ENCODE measurements at regions of chr14 and their contacts with region 1.

Region 1: DNA sequence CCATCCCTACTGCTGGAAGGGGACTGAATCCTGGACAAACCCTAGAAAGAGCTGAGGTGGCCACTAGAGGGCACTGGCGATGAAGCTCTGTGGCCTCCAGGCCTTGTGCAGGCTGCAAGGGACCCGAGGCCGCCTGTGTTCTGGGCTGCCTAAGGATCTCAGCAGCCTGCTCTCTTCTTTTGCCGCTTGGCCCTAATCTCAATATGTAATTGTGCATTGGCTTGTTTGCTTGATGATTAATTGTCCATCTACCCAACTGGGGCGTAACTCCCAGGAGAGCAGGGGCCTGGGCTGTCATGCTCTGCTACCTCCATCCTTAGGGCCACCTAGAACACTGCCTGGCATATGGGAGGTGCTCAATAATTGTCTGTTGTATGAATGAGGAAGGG is 73.8 kb downstream of the SYNE3 start:
- DNase-seq: peak; percentile 86
- ATAC-seq: peak; percentile 96
- H3K4me3 ChIP-seq: no peak overlapping the region
- H3K27ac ChIP-seq: no peak overlapping the region
- H3K4me1 ChIP-seq: no peaks in the 10 kb centered on the region
- H3K27me3 ChIP-seq: no peaks in the 10 kb centered on the region
- CTCF ChIP-seq: peak; percentile 92

Region 2: DNA sequence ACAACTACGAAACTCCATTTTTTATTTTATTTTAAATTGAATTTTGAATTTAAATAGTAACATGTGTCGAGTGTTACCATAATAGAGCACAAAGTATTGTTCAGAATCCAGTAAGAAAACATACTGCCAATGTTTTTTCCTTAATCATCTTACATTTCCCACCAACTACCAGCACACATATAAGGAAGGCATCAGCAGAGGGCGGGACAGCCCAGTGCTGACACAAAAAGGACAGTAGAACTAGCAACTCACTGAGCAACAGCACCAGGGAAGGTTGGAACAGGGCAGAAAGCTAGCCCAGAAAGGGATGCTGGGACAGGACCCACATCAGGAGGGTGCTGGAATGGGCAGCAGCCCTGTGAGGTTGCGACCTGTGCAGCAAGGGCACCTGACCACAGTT is 329.2 kb before region 1 on chr14:
- intact Hi-C with region 1: loop called (anchors 5 kb)
- DNase-seq: no peak
- ATAC-seq: no peak
- H3K4me3 ChIP-seq: no peak overlapping the region
- H3K27ac ChIP-seq: no peak overlapping the region
- H3K4me1 ChIP-seq: no peaks in the 10 kb centered on the region
- H3K27me3 ChIP-seq: no peaks in the 10 kb centered on the region
- CTCF ChIP-seq: no peak

Region 3: DNA sequence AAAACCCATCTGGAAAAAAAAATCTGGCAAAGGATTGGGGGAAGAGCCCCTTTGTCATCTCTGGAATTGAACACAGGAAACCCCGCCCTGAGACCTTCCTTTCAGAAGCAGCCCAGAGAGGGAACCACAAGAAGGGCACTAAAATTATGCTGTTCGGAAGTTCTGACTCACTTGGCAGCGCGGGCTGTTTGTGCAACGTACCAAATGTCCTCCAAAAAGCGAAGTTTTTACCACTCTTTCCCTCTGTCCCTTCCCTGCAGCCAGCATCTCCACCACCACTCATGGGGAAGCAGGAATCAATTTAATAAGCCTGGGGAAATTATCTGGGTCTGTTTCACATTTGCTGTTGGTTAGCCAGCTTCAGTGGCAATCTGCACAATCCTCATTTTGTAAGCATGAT is 77.1 kb after region 1 on chr14:
- intact Hi-C with region 1: loop called (anchors 5 kb)
- DNase-seq: no peak
- ATAC-seq: peak; percentile 32
- H3K4me3 ChIP-seq: no peak overlapping the region
- H3K27ac ChIP-seq: peak overlapping the region; percentile 81
- H3K4me1 ChIP-seq: peaks cover 79% of the 10 kb centered on the region
- H3K27me3 ChIP-seq: no peaks in the 10 kb centered on the region
- CTCF ChIP-seq: no peak